Caco-2 (cell line): ENCODE measurements at regions of chr6 and their contacts with region 1.

Region 1: GRCh38 chr6:125944434-125944816 is 12.1 kb upstream of the HINT3 start:
- DNase-seq: peak in 1 of 2 experiments; percentile 46
- H3K4me3 ChIP-seq: no peak overlapping the region
- H3K4me3 Mint-ChIP-seq: peak overlapping the region; percentile 27
- H3K27ac Mint-ChIP-seq: no peak overlapping the region
- H3K4me1 ChIP-seq: peaks cover 98% of the 10 kb centered on the region
- H3K4me1 Mint-ChIP-seq: peaks cover 52% of the 10 kb centered on the region
- H3K27me3 ChIP-seq: no peaks in the 10 kb centered on the region
- H3K27me3 Mint-ChIP-seq: no peaks in the 10 kb centered on the region
- CTCF ChIP-seq: no peak

Region 2: GRCh38 chr6:125872259-125872921 is 72.0 kb before region 1 on chr6:
- CTCF ChIA-PET with region 1: no interaction called
- POLR2A ChIA-PET with region 1: no interaction called
- intact Hi-C with region 1: loop called (anchors 1 kb)
- DNase-seq: peak; percentile 57 to 58
- H3K4me3 ChIP-seq: no peak overlapping the region
- H3K4me3 Mint-ChIP-seq: peak overlapping the region; percentile 46
- H3K27ac Mint-ChIP-seq: peak overlapping the region; percentile 80
- H3K4me1 ChIP-seq: peaks cover 61% of the 10 kb centered on the region
- H3K4me1 Mint-ChIP-seq: peaks cover 37% of the 10 kb centered on the region
- H3K27me3 ChIP-seq: no peaks in the 10 kb centered on the region
- H3K27me3 Mint-ChIP-seq: no peaks in the 10 kb centered on the region
- CTCF ChIP-seq: no peak